ENCODE measurements at regions of chr9 and their contacts with region 1.

Region 1: GRCh38 chr9:114397848-114398605 is 10.2 kb upstream of the AKNA start:
- DNase-seq: peak; percentile 96
- H3K4me3 ChIP-seq: peak overlapping the region; percentile 68
- H3K27ac ChIP-seq: peak overlapping the region; percentile 81
- H3K4me1 ChIP-seq: peaks cover 26% of the 10 kb centered on the region
- H3K27me3 ChIP-seq: no peaks in the 10 kb centered on the region
- CTCF ChIP-seq: no peak

Region 2: GRCh38 chr9:114263853-114264510 is 134.0 kb before region 1 on chr9:
- CTCF ChIA-PET with region 1: no interaction called
- POLR2A ChIA-PET with region 1: no interaction called
- intact Hi-C with region 1: no loop called
- DNase-seq: no peak
- H3K4me3 ChIP-seq: no peak overlapping the region
- H3K27ac ChIP-seq: no peak overlapping the region
- H3K4me1 ChIP-seq: peaks cover 13% of the 10 kb centered on the region
- H3K27me3 ChIP-seq: no peaks in the 10 kb centered on the region
- CTCF ChIP-seq: 0 out of 2 replicates have a peak, but pooled peaks have one; percentile 27

Region 3: GRCh38 chr9:114385412-114386181 is 12.4 kb before region 1 on chr9:
- CTCF ChIA-PET with region 1: no interaction called
- POLR2A ChIA-PET with region 1: interaction called, 10 read pairs
- intact Hi-C with region 1: no loop called
- DNase-seq: peak; percentile 50
- H3K4me3 ChIP-seq: no peak overlapping the region
- H3K27ac ChIP-seq: peak overlapping the region; percentile 4
- H3K4me1 ChIP-seq: peaks cover 26% of the 10 kb centered on the region
- H3K27me3 ChIP-seq: no peaks in the 10 kb centered on the region
- CTCF ChIP-seq: no peak

Region 4: DNA sequence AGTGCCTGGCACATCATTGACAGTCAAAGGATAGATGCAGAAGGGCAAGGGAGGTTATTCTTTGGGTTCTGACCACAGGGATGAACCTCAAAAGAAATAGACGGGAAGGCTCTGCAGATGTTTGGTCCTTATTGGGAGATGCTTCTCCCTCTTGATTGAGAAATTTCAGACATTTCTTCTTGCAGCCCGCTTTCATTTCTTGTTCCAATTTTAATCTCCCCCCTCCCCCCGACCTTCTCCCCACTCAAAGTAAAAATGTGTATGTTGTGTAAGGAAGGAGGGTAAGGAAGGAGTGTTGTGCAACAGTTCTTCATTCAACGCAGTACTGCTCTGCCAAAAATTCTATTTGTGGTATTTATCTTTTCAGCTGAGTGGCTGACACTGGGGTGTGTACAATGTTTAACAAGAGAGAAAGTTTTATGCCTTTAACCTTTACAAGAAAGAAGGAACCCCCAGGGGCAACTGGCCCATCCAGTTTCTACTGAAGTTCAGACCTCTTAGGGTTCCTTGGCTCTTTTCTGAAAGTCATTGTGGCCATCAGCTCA is 454.1 kb after region 1 on chr9:
- CTCF ChIA-PET with region 1: no interaction called
- POLR2A ChIA-PET with region 1: no interaction called
- intact Hi-C with region 1: no loop called
- DNase-seq: no peak
- H3K4me3 ChIP-seq: no peak overlapping the region
- H3K27ac ChIP-seq: no peak overlapping the region
- H3K4me1 ChIP-seq: no peaks in the 10 kb centered on the region
- H3K27me3 ChIP-seq: no peaks in the 10 kb centered on the region
- CTCF ChIP-seq: no peak

Measured in A673 (cell line).